H1 (cell line): ENCODE measurements at regions of chr5 and their contacts with region 1.

Region 1: DNA sequence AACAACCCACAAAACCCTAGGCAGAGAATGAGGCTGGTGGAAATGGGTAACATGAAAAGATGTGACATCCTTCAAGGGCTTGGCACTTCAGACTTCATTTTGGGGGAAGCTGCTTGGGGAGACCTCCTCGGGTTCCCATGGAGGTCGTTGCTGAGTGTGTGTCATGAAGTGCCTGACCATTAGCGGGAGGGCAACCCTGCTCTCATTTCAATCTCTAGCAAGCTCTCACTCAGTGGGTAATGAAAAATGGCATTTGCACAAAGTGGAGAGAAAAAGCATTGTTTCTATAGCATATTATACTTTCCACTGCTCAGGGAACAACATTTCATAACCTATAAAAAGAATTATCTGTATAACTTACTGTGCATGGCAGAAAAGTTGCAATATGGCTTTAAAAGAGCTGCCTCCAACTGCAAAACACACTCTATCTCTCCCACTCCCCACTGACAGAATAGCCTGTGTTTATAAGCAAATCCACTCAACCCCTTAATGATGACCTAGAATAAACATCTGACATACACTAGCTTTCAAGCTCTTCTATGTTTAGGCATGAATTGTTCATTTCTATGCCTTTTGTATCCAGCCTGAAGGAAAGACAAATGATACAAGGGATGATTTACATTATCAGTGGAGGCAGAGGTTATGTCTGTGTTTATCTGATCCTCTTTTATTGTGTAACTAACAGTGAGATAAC is 357.2 kb downstream of the ZSWIM6 start:
- DNase-seq: no peak
- H3K4me3 ChIP-seq: no peak overlapping the region
- H3K27ac ChIP-seq: no peak overlapping the region
- H3K4me1 ChIP-seq: no peaks in the 10 kb centered on the region
- H3K27me3 ChIP-seq: no peaks in the 10 kb centered on the region
- CTCF ChIP-seq: no peak
- EP300 ChIP-seq: no peak
- POLR2A ChIP-seq: no peak
- RAD21 ChIP-seq: no peak

Region 2: DNA sequence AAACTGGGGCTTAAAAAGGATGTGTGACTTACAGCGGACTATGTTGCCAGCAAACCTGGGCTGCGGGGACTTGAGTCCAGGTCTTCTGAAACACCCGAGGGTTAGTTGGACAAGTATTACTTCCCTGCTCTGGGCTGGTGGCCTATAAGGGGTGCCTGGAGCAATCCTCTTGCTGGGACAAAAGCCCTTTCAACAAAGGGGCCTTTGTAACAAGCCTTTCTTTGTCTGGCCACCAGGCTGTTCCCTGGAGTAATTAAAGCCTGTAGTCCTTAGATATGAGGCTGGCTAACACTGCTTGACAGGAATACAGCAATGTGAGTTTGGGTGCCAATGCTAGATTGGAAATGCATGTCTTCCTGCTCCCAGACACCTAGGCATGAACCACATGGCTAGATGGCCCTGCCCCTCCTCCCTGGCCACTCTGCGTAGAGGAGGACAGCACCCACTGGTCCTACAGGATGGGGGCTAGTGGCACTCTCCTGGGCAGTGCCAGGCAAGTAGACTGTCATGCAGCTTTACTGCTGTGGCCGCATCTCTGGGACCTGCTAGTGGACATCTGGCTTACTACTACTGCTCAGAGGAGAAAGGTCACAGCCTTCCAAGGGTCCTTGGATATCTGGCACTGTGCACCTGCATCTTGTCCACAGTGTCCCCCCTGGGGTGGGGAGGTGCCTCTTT is 14.1 kb before region 1 on chr5:
- CTCF ChIA-PET with region 1: interaction called, 14 read pairs
- POLR2A ChIA-PET with region 1: interaction called, 3 read pairs
- DNase-seq: no peak
- H3K4me3 ChIP-seq: no peak overlapping the region
- H3K27ac ChIP-seq: no peak overlapping the region
- H3K4me1 ChIP-seq: peaks cover 0 to 2% (median 0%) of the 10 kb centered on the region in 4 experiments; a peak in 4 of 7 replicates
- H3K27me3 ChIP-seq: no peaks in the 10 kb centered on the region
- CTCF ChIP-seq: peak in 2 of 3 experiments; percentile 25 to 41; a peak in 2 of 4 replicates
- EP300 ChIP-seq: no peak
- POLR2A ChIP-seq: no peak
- RAD21 ChIP-seq: peak; percentile 37 to 42

Region 3: DNA sequence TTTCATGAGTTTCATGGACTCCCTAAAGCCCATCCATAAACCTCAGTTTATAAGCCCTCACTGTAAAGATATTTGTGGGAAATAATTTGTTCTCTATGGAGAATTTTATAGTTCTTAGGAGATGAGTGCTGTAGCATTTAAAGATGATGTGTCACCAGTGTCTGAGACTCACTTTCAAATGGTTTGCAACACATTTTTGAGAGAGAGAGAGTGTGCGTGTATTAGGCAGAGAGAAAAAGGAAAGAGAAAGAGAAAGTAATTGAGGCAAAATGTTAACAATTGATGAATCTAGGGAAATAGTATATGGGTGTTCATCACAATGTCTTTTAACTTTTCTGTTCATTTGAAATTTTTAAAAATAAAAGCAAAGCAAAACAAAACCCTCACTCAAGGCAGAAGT is 121.8 kb after region 1 on chr5:
- CTCF ChIA-PET with region 1: no interaction called
- POLR2A ChIA-PET with region 1: no interaction called
- DNase-seq: no peak
- H3K4me3 ChIP-seq: no peak overlapping the region
- H3K27ac ChIP-seq: no peak overlapping the region
- H3K4me1 ChIP-seq: peaks cover 0 to under 1% (median 0%) of the 10 kb centered on the region in 4 experiments; a peak in 1 of 7 replicates
- H3K27me3 ChIP-seq: no peaks in the 10 kb centered on the region
- CTCF ChIP-seq: no peak
- EP300 ChIP-seq: no peak
- POLR2A ChIP-seq: no peak
- RAD21 ChIP-seq: no peak

Region 4: GRCh38 chr5:61823781-61824180 is 134.5 kb after region 1 on chr5:
- CTCF ChIA-PET with region 1: no interaction called
- POLR2A ChIA-PET with region 1: no interaction called
- DNase-seq: no peak
- H3K4me3 ChIP-seq: no peak overlapping the region
- H3K27ac ChIP-seq: no peak overlapping the region
- H3K4me1 ChIP-seq: peaks cover 0 to 3% (median 1%) of the 10 kb centered on the region in 4 experiments; a peak in 3 of 7 replicates
- H3K27me3 ChIP-seq: no peaks in the 10 kb centered on the region
- CTCF ChIP-seq: no peak
- EP300 ChIP-seq: no peak
- POLR2A ChIP-seq: no peak
- RAD21 ChIP-seq: no peak